ENCODE measurements at regions of chr1 and their contacts with region 1.

Region 1: DNA sequence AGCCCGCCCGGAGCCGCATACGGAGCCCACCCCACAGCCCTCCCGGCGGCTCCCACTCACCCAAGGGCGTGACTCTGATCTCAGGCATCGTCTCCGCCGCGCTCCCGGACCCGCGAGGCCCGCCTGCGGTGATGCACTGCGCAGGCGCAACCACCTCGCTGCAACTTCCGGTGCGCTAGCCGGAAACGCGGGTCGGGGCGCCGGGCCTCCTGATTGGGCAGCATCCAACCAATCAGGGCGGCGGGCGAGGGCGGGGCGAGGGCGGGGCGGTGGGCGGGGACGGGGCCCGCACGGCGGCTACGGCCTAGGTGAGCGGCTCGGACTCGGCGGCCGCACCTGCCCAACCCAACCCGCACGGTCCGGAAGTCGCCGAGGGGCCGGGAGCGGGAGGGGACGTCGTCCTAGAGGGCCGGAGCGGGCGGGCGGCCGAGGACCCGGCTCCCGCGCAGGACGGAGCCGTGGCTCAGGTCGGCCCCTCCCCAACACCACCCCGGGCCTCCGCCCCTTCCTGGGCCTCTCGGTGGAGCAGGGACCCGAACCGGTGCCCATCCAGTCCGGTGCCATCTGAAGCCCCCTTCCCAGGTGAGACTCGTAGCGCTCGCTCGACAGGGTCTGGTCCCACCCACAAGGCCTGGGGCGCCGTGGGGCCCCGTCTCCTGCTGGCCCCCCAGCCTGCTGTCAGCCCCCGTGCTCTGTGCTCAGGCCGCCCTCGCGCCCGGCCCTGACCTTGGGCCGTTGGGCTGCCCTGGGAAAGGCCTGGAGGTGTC is at the starts of genes CPTP and INTS11:
- DNase-seq: peak; percentile 95
- ATAC-seq: peak; percentile 89
- H3K4me3 ChIP-seq: peak within 1 kb of the TSS; percentile 31 to 84 (median 74)
- H3K4me3 Mint-ChIP-seq: peak within 1 kb of the TSS; percentile 93
- H3K27ac ChIP-seq: peak within 1 kb of the TSS; percentile 10 to 75
- H3K27ac Mint-ChIP-seq: peak within 1 kb of the TSS; percentile 92
- H3K4me1 ChIP-seq: peaks cover 20 to 32% of the 10 kb centered on the region in 2 donors
- H3K4me1 Mint-ChIP-seq: peaks cover 29% of the 10 kb centered on the region
- H3K27me3 ChIP-seq: no peaks in the 10 kb centered on the region
- H3K27me3 Mint-ChIP-seq: no peaks in the 10 kb centered on the region
- CTCF ChIP-seq: no peak
- total RNA-seq, gene CPTP: 18.8 and 21.6 TPM in 2 replicates
- total RNA-seq, gene INTS11: 149 and 167 TPM in 2 replicates

Region 2: GRCh38 chr1:1273512-1274298 is 51.0 kb before region 1 on chr1 and contains the start of gene UBE2J2:
- CTCF ChIA-PET with region 1: no interaction called
- POLR2A ChIA-PET with region 1: no interaction called
- intact Hi-C with region 1: loop called (anchors 1 kb)
- DNase-seq: peak; percentile 94
- ATAC-seq: peak; percentile 98
- H3K4me3 ChIP-seq: peak within 1 kb of the TSS; percentile 3 to 84 (median 77)
- H3K4me3 Mint-ChIP-seq: peak within 1 kb of the TSS; percentile 88
- H3K27ac ChIP-seq: peak within 1 kb of the TSS; percentile 24 to 77
- H3K27ac Mint-ChIP-seq: peak within 1 kb of the TSS; percentile 76
- H3K4me1 ChIP-seq: peaks cover 29 to 38% of the 10 kb centered on the region in 2 donors
- H3K4me1 Mint-ChIP-seq: peaks cover 36% of the 10 kb centered on the region
- H3K27me3 ChIP-seq: no peaks in the 10 kb centered on the region
- H3K27me3 Mint-ChIP-seq: no peaks in the 10 kb centered on the region
- CTCF ChIP-seq: no peak
- total RNA-seq, gene UBE2J2: 115 and 120 TPM in 2 replicates

Region 3: DNA sequence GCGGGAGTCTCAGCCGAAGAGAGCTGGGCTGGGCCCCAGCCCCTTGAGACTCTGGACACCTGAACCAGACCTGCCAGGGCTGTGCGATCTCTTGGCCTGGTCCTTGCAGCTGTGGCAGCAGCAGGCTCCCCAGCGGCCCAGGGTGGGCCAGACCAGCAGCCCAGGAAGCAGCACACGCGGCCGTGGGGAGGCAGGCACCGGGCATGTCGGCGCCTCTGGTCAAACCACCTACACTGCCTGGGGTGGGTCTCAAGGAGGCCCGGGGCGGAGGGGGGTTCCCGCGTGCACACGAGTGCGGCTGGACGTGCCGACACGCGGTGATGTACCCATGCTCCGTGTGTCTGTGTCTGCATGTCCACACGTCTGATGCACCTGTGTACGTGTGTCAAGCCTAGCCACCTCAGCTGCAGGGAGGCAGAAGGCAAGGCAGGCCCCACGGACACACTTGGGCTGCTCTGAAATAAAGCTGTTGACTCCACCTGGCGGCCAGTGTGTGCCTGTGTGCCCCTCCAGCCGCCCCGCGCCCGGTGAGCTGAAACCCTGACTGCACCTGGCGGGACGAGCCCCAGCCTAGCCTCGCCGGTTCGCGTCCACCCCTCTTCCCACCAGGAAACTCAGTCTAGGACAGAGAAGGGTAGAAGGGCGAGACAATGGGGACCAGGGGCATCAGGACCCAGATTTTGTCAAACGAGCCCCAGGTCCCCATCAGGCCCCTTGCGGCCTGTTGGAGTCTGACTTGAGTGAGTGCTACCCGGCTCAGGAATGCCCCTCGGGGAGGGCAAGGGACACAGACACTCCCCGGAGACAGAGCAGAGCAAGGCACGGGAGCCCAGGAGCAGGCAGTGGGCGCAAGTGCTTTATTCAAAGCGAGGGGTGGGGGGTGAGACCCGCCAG is 32.9 kb before region 1 on chr1:
- CTCF ChIA-PET with region 1: no interaction called
- POLR2A ChIA-PET with region 1: no interaction called
- intact Hi-C with region 1: no loop called
- DNase-seq: peak; percentile 87
- ATAC-seq: peak; percentile 84
- H3K4me3 ChIP-seq: no peak overlapping the region
- H3K4me3 Mint-ChIP-seq: no peak overlapping the region
- H3K27ac ChIP-seq: no peak overlapping the region
- H3K27ac Mint-ChIP-seq: peak overlapping the region; percentile 50
- H3K4me1 ChIP-seq: peaks cover 0 to 16% of the 10 kb centered on the region in 2 donors
- H3K4me1 Mint-ChIP-seq: peaks cover 11% of the 10 kb centered on the region
- H3K27me3 ChIP-seq: no peaks in the 10 kb centered on the region
- H3K27me3 Mint-ChIP-seq: no peaks in the 10 kb centered on the region
- CTCF ChIP-seq: peak; percentile 74

Region 4: GRCh38 chr1:1349256-1350012 is 24.7 kb after region 1 on chr1 and contains the start of gene DVL1:
- CTCF ChIA-PET with region 1: no interaction called
- POLR2A ChIA-PET with region 1: no interaction called
- intact Hi-C with region 1: loop called (anchors 1 kb)
- DNase-seq: peak; percentile 88
- ATAC-seq: peak; percentile 81
- H3K4me3 ChIP-seq: peak within 1 kb of the TSS; percentile 34 to 81 (median 64)
- H3K4me3 Mint-ChIP-seq: peak within 1 kb of the TSS; percentile 83
- H3K27ac ChIP-seq: peak within 1 kb of the TSS in 1 of 2 donors; percentile 73
- H3K27ac Mint-ChIP-seq: peak within 1 kb of the TSS; percentile 56
- H3K4me1 ChIP-seq: peaks cover 30 to 44% of the 10 kb centered on the region in 2 donors
- H3K4me1 Mint-ChIP-seq: peaks cover 31% of the 10 kb centered on the region
- H3K27me3 ChIP-seq: peaks cover 0 to 31% (median 10%) of the 10 kb centered on the region in 4 experiments
- H3K27me3 Mint-ChIP-seq: peaks cover 12% of the 10 kb centered on the region
- CTCF ChIP-seq: peak; percentile 46
- total RNA-seq, gene DVL1: 46.1 and 48.2 TPM in 2 replicates

Region 5: DNA sequence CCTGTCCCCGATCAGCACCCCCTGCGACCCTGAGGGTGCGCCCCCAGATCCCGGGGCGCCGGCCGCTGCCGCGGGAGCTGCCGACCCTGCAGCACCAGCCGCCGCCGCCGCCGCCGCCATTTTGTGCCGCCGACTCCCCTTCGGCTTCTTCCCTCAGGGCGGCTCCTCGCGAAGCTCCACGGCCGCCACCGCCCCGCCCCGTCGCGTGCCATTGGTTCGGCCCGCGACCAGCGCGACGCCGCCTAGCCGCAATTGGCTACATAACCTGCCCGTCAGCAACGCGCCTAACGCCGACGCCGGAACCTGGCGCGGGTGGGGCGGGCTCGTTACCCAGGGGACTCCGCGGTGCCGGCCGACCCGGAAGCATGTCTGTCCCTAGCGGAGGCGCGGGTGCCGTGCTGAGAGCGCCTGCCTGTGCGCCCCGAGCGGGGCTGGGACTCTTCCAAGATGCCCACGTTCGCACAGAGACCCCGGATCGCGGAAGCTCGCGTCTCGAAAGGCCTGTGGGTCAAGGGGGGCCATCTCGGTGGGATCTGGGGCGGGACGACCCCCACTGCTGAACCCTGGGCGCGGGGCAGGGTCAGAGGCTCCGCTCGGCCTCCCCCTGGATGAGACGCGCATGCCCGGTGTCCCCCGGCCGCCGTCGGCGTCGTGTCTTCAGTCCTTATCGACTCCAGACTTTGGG is 74.6 kb after region 1 on chr1 and contains the start of gene CCNL2:
- CTCF ChIA-PET with region 1: no interaction called
- POLR2A ChIA-PET with region 1: no interaction called
- intact Hi-C with region 1: no loop called
- DNase-seq: peak; percentile 99
- ATAC-seq: peak; percentile 96
- H3K4me3 ChIP-seq: peak within 1 kb of the TSS; percentile 79 to 96 (median 92)
- H3K4me3 Mint-ChIP-seq: peak within 1 kb of the TSS; percentile 94
- H3K27ac ChIP-seq: peak within 1 kb of the TSS; percentile 70 to 85
- H3K27ac Mint-ChIP-seq: peak within 1 kb of the TSS; percentile 91
- H3K4me1 ChIP-seq: peaks cover 23 to 29% of the 10 kb centered on the region in 2 donors
- H3K4me1 Mint-ChIP-seq: peaks cover 49% of the 10 kb centered on the region
- H3K27me3 ChIP-seq: no peaks in the 10 kb centered on the region
- H3K27me3 Mint-ChIP-seq: no peaks in the 10 kb centered on the region
- CTCF ChIP-seq: peak; percentile 67
- total RNA-seq, gene CCNL2: 347 and 367 TPM in 2 replicates